CD4-positive, alpha-beta memory T cell (primary cell): ENCODE measurements at regions of chr3 and their contacts with region 1.

Region 1: GRCh38 chr3:137013955-137014688 is 56.3 kb downstream of the IL20RB start:
- DNase-seq: peak; percentile 73 to 81 (median 75)
- H3K4me3 ChIP-seq: peak overlapping the region in 1 of 2 donors; percentile 3
- H3K4me3 Mint-ChIP-seq: peak overlapping the region; percentile 65 to 89 (median 78)
- H3K27ac ChIP-seq: no peak overlapping the region
- H3K27ac Mint-ChIP-seq: peak overlapping the region in 4 of 7 donors; percentile 23 to 77 (median 38)
- H3K4me1 ChIP-seq: no peaks in the 10 kb centered on the region
- H3K4me1 Mint-ChIP-seq: peaks cover 5 to 12% (median 7%) of the 10 kb centered on the region in 4 donors
- H3K27me3 ChIP-seq: no peaks in the 10 kb centered on the region
- H3K27me3 Mint-ChIP-seq: no peaks in the 10 kb centered on the region

Region 2: DNA sequence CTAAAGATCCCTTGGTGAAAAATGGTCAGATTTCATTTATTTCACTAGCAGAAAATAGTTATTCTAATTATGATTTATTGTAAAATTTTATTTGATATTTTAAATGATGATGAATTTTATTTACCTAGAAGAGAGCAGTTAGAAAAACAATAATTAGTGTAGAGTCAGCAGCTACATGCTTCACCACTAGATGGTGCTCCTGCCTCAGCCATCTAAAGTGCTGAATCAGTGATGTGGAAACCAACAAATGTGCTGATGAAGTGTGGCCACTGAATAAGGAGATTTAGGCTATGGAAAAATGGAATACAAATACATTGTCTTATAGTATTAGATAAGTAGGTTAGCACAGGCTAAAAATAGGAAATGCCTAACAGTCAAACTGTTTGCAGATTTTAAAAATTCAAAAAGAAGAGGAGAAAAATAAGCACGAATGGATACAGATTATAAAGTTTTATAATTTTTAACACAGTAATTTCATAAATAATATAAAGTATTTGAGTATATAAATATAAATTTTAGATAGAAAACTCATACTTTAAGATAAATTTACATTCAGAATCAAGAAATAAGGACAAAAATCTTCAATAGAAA is 938.8 kb before region 1 on chr3:
- CTCF ChIA-PET with region 1: interaction called, 60 read pairs
- POLR2A ChIA-PET with region 1: no interaction called
- intact Hi-C with region 1: loop called (anchors 1 kb)
- DNase-seq: peak; percentile 56 to 70 (median 64)
- H3K4me3 ChIP-seq: no peak overlapping the region
- H3K4me3 Mint-ChIP-seq: no peak overlapping the region
- H3K27ac ChIP-seq: no peak overlapping the region
- H3K27ac Mint-ChIP-seq: no peak overlapping the region
- H3K4me1 ChIP-seq: no peaks in the 10 kb centered on the region
- H3K4me1 Mint-ChIP-seq: peaks cover 0 to 4% (median 1%) of the 10 kb centered on the region in 4 donors
- H3K27me3 ChIP-seq: no peaks in the 10 kb centered on the region
- H3K27me3 Mint-ChIP-seq: no peaks in the 10 kb centered on the region

Region 3: DNA sequence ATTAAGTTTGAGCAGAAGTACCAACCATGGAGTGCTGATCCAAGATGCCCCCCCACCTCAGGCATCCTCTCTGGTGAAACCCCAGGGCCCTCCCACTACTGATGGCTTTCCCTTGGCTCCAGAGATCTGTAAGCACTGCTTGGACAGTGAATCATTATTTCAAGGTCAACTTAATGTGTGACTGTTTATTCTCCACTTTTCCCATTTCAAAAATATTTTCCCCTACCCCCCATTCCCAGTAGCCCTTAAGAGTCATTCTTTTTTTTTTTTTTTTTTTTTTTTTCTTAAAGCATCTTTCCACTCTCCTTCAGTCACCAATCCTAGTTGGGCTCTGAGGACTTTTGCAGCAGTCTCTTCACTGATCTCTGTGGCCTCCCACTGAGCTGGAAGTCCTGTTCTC is 681.3 kb before region 1 on chr3:
- CTCF ChIA-PET with region 1: interaction called, 4 read pairs
- POLR2A ChIA-PET with region 1: no interaction called
- intact Hi-C with region 1: loop called (anchors 5 kb)
- DNase-seq: no peak
- H3K4me3 ChIP-seq: no peak overlapping the region
- H3K4me3 Mint-ChIP-seq: no peak overlapping the region
- H3K27ac ChIP-seq: no peak overlapping the region
- H3K27ac Mint-ChIP-seq: peak overlapping the region in 5 of 7 donors; percentile 2 to 62 (median 54)
- H3K4me1 ChIP-seq: no peaks in the 10 kb centered on the region
- H3K4me1 Mint-ChIP-seq: peaks cover 0 to 2% (median 1%) of the 10 kb centered on the region in 4 donors
- H3K27me3 ChIP-seq: no peaks in the 10 kb centered on the region
- H3K27me3 Mint-ChIP-seq: no peaks in the 10 kb centered on the region

Region 4: GRCh38 chr3:136545664-136546268 is 468.4 kb before region 1 on chr3:
- CTCF ChIA-PET with region 1: interaction called, 5 read pairs
- POLR2A ChIA-PET with region 1: no interaction called
- intact Hi-C with region 1: loop called (anchors 5 kb)
- DNase-seq: no peak
- H3K4me3 ChIP-seq: no peak overlapping the region
- H3K4me3 Mint-ChIP-seq: no peak overlapping the region
- H3K27ac ChIP-seq: no peak overlapping the region
- H3K27ac Mint-ChIP-seq: peak overlapping the region in 3 of 7 donors; percentile 23 to 49 (median 26)
- H3K4me1 ChIP-seq: peaks cover 8% of the 10 kb centered on the region
- H3K4me1 Mint-ChIP-seq: peaks cover 18 to 35% (median 21%) of the 10 kb centered on the region in 4 donors
- H3K27me3 ChIP-seq: no peaks in the 10 kb centered on the region
- H3K27me3 Mint-ChIP-seq: no peaks in the 10 kb centered on the region

Region 5: GRCh38 chr3:136861890-136862616 is 152.1 kb before region 1 on chr3 and contains the start of gene NCK1:
- CTCF ChIA-PET with region 1: interaction called, 43 read pairs
- POLR2A ChIA-PET with region 1: interaction called, 11 read pairs
- intact Hi-C with region 1: loop called (anchors 2 kb)
- DNase-seq: peak; percentile 97 to 100 (median 98)
- H3K4me3 ChIP-seq: peak within 1 kb of the TSS; percentile 74 to 89
- H3K4me3 Mint-ChIP-seq: peak within 1 kb of the TSS; percentile 80 to 99 (median 96)
- H3K27ac ChIP-seq: peak within 1 kb of the TSS; percentile 91
- H3K27ac Mint-ChIP-seq: peak within 1 kb of the TSS; percentile 98 to 99 (median 98)
- H3K4me1 ChIP-seq: peaks cover 47% of the 10 kb centered on the region
- H3K4me1 Mint-ChIP-seq: peaks cover 38 to 74% (median 54%) of the 10 kb centered on the region in 4 donors
- H3K27me3 ChIP-seq: no peaks in the 10 kb centered on the region
- H3K27me3 Mint-ChIP-seq: no peaks in the 10 kb centered on the region
- total RNA-seq, gene NCK1: 61.2 to 68.4 TPM

Region 6: DNA sequence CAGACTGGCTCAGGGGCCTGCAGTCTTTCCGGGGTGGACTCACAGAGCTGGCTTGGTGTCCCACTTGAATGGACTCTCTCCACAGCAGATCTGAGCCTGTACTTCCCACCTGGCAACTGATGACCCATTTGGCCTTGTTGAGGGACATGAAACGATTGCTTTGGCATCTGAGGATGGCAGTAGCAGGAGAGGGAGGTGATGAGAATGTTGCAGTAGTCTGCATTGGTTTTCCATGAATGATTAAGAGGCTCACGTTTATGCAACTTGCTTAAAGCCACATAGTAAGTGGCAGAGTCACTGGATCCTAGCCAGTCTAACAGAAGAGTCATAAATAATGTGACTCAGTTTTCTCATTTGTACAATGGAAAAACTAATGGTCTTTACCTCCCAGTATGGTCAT is 34.4 kb before region 1 on chr3:
- CTCF ChIA-PET with region 1: no interaction called
- POLR2A ChIA-PET with region 1: no interaction called
- intact Hi-C with region 1: no loop called
- DNase-seq: no peak
- H3K4me3 ChIP-seq: no peak overlapping the region
- H3K4me3 Mint-ChIP-seq: no peak overlapping the region
- H3K27ac ChIP-seq: no peak overlapping the region
- H3K27ac Mint-ChIP-seq: no peak overlapping the region
- H3K4me1 ChIP-seq: no peaks in the 10 kb centered on the region
- H3K4me1 Mint-ChIP-seq: peaks cover 0 to 2% (median 0%) of the 10 kb centered on the region in 4 donors
- H3K27me3 ChIP-seq: no peaks in the 10 kb centered on the region
- H3K27me3 Mint-ChIP-seq: no peaks in the 10 kb centered on the region

Region 7: GRCh38 chr3:137024348-137024747 is 10.2 kb after region 1 on chr3:
- CTCF ChIA-PET with region 1: interaction called, 20 read pairs
- POLR2A ChIA-PET with region 1: no interaction called
- intact Hi-C with region 1: no loop called
- DNase-seq: no peak
- H3K4me3 ChIP-seq: no peak overlapping the region
- H3K4me3 Mint-ChIP-seq: no peak overlapping the region
- H3K27ac ChIP-seq: no peak overlapping the region
- H3K27ac Mint-ChIP-seq: no peak overlapping the region
- H3K4me1 ChIP-seq: no peaks in the 10 kb centered on the region
- H3K4me1 Mint-ChIP-seq: no peaks in the 10 kb centered on the region
- H3K27me3 ChIP-seq: no peaks in the 10 kb centered on the region
- H3K27me3 Mint-ChIP-seq: peaks cover 2 to 7% of the 10 kb centered on the region in 2 donors